ENCODE measurements at regions of chr2 and their contacts with region 1.

Region 1: GRCh38 chr2:219278655-219279516 is at the start of gene DNAJB2:
- DNase-seq: peak; percentile 100
- ATAC-seq: peak; percentile 86
- H3K4me3 Mint-ChIP-seq: peak within 1 kb of the TSS; percentile 96
- H3K27ac Mint-ChIP-seq: peak within 1 kb of the TSS; percentile 95
- H3K4me1 Mint-ChIP-seq: peaks cover 37% of the 10 kb centered on the region
- H3K27me3 Mint-ChIP-seq: no peaks in the 10 kb centered on the region
- total RNA-seq, gene DNAJB2: 51.8 to 62.8 TPM

Region 2: GRCh38 chr2:218286570-218287459 is 992.1 kb before region 1 on chr2:
- CTCF ChIA-PET with region 1: no interaction called
- POLR2A ChIA-PET with region 1: no interaction called
- intact Hi-C with region 1: loop called in 1 of 2 experiments (anchors 5 kb)
- DNase-seq: peak; percentile 91
- ATAC-seq: peak; percentile 74
- H3K4me3 Mint-ChIP-seq: peak overlapping the region; percentile 80
- H3K27ac Mint-ChIP-seq: peak overlapping the region; percentile 99
- H3K4me1 Mint-ChIP-seq: peaks cover 88% of the 10 kb centered on the region
- H3K27me3 Mint-ChIP-seq: no peaks in the 10 kb centered on the region

Region 3: DNA sequence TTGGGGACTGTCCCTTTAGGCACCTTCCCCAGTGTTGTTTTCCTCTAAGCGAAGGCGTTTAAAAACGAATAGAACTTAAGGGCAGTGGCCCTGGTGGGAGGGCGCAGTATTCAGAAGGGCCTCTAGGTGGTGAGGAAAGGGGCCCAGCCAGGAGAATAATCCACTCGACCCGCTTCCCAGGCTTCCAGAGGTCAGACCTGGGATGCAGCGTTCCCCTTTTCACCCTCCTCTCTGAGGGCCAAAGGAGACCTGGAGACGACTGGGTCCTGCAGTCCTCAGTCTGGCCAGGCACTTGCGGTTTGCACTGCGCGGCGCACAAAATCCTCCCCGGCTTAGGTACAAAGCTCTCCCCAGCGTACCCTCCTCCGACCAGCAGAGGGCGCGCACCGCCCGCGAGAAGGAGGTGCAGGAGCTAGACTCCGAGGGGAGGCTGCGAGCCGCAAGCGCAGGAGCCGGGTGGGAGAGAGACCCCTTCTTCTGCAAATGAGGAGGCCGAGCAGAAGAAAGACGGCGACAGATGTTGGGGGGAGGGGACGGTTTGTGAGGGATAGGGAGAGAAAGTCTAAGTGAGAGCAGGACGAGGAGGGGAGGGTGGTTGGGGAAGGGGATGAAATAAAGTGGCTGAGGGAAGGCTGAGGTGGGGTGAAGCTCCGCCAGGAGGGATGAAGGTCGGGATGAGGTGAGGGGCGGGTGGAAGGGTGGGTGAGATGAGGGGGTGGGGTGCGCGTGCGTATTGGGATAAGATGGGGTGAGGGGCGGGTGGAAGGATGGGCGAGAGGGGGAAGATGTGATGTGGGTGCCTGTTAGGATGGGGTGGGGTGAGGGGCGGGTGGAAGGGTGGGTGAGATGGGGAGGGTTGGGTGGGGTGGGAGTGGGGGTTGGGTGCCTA is 298.8 kb before region 1 on chr2:
- CTCF ChIA-PET with region 1: no interaction called
- POLR2A ChIA-PET with region 1: no interaction called
- intact Hi-C with region 1: no loop called
- DNase-seq: peak; percentile 93
- ATAC-seq: peak; percentile 90
- H3K4me3 Mint-ChIP-seq: peak overlapping the region; percentile 43
- H3K27ac Mint-ChIP-seq: no peak overlapping the region
- H3K4me1 Mint-ChIP-seq: peaks cover 28% of the 10 kb centered on the region
- H3K27me3 Mint-ChIP-seq: peaks cover 56% of the 10 kb centered on the region

Region 4: DNA sequence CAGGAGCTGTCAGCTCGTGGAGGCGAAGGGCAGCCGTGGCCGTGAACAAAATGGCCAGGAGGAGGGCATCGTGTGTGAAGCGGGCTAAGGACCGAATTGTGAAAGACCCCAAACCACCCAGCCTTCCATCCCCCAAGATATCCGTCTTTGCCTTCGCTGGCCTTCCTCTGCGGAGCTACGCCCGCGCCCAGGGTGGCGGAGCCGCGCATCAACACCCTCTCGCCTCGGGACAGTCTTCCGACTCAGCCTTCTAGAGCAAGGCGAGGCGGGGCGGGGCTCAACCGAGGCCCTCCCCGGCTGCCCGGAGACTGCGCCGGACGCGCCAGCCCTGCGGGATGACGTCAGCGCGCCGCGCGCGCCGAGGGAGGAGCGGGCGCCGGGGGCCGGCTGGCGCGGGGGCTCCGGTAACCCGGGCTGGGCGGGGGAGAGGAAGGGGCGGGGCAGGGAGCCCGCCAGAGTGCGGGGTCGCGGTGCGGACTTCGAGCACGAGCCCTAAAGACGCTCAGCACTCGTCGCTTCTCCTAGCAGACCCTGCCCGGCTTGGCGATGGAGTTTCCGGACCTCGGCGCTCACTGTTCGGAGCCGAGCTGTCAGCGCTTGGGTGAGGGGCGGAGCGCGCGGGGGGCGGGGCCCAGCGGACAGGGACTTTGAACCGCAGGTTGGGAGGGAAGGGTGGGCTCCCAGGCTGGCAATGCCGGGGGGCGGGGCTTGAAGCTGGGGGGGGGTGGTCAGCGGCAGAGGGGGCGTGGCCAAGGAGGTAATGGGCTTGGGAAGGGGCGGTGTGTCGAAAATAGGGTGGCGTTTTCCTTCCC is 72.2 kb before region 1 on chr2 and contains the start of gene ZFAND2B:
- CTCF ChIA-PET with region 1: interaction called, 5 read pairs
- POLR2A ChIA-PET with region 1: no interaction called
- intact Hi-C with region 1: loop called (anchors 1 to 2 kb)
- DNase-seq: peak; percentile 98
- ATAC-seq: peak; percentile 96
- H3K4me3 Mint-ChIP-seq: peak within 1 kb of the TSS; percentile 86
- H3K27ac Mint-ChIP-seq: peak within 1 kb of the TSS; percentile 94
- H3K4me1 Mint-ChIP-seq: peaks cover 34% of the 10 kb centered on the region
- H3K27me3 Mint-ChIP-seq: no peaks in the 10 kb centered on the region
- total RNA-seq, gene ZFAND2B: 21.5 to 27.6 TPM

Region 5: DNA sequence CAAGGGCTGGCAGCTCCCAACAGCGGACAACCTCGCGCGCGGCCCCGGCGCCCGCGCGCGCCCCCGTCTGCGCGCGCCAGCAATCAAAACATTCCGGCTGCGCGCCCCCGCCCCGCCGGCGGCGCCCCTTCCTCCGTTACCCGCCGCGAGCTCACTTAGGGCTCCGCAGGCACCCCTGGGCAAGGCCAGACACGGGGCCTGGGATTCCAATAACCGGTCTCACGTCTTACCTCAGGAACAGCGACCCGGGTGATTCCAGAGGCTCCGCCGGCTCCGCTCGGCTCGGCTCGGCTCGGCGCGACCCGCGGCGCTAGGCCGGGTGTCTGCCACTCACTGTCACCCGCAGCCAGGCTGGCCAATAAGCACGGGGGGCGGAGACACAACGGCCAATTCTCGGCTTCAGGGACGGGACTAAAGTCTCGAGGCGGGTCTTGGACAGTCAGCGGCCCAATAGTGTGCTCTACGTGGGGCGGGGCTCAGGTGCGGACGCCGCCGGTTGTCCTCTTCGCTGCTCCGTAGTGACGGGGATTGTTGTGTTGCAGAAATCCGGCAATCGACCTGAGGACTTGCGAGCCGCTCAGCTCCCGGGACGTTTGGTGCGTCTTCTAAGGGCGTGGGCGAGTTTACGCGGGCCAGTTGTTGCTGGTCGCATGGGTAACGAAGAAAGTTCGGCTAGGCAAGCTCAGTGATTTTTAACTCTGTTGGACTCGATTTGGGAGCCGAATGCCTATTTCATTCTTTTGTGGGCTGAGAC is 49.4 kb before region 1 on chr2 and contains the starts of genes ANKZF1 and ATG9A:
- CTCF ChIA-PET with region 1: interaction called, 7 read pairs
- POLR2A ChIA-PET with region 1: interaction called, 8 read pairs
- intact Hi-C with region 1: loop called (anchors 1 kb)
- DNase-seq: peak; percentile 99
- ATAC-seq: peak; percentile 98
- H3K4me3 Mint-ChIP-seq: peak within 1 kb of the TSS; percentile 98
- H3K27ac Mint-ChIP-seq: peak within 1 kb of the TSS; percentile 98
- H3K4me1 Mint-ChIP-seq: peaks cover 34% of the 10 kb centered on the region
- H3K27me3 Mint-ChIP-seq: no peaks in the 10 kb centered on the region
- total RNA-seq, gene ANKZF1: 140 to 166 TPM
- total RNA-seq, gene ATG9A: 43.5 to 45.6 TPM

Region 6: GRCh38 chr2:219253753-219254590 is 24.9 kb before region 1 on chr2 and contains the start of gene TUBA4A:
- CTCF ChIA-PET with region 1: interaction called, 68 read pairs
- POLR2A ChIA-PET with region 1: interaction called, 33 read pairs
- intact Hi-C with region 1: loop called (anchors 1 kb)
- DNase-seq: peak; percentile 94
- ATAC-seq: peak; percentile 63
- H3K4me3 Mint-ChIP-seq: peak within 1 kb of the TSS; percentile 89
- H3K27ac Mint-ChIP-seq: peak within 1 kb of the TSS; percentile 93
- H3K4me1 Mint-ChIP-seq: peaks cover 54% of the 10 kb centered on the region
- H3K27me3 Mint-ChIP-seq: no peaks in the 10 kb centered on the region
- total RNA-seq, gene TUBA4A: 210 to 369 TPM

Region 7: GRCh38 chr2:219325136-219325535 is 46.2 kb after region 1 on chr2:
- CTCF ChIA-PET with region 1: no interaction called
- POLR2A ChIA-PET with region 1: no interaction called
- intact Hi-C with region 1: no loop called
- DNase-seq: no peak
- ATAC-seq: no peak
- H3K4me3 Mint-ChIP-seq: no peak overlapping the region
- H3K27ac Mint-ChIP-seq: no peak overlapping the region
- H3K4me1 Mint-ChIP-seq: peaks cover 11% of the 10 kb centered on the region
- H3K27me3 Mint-ChIP-seq: peaks cover 19% of the 10 kb centered on the region

Region 8: DNA sequence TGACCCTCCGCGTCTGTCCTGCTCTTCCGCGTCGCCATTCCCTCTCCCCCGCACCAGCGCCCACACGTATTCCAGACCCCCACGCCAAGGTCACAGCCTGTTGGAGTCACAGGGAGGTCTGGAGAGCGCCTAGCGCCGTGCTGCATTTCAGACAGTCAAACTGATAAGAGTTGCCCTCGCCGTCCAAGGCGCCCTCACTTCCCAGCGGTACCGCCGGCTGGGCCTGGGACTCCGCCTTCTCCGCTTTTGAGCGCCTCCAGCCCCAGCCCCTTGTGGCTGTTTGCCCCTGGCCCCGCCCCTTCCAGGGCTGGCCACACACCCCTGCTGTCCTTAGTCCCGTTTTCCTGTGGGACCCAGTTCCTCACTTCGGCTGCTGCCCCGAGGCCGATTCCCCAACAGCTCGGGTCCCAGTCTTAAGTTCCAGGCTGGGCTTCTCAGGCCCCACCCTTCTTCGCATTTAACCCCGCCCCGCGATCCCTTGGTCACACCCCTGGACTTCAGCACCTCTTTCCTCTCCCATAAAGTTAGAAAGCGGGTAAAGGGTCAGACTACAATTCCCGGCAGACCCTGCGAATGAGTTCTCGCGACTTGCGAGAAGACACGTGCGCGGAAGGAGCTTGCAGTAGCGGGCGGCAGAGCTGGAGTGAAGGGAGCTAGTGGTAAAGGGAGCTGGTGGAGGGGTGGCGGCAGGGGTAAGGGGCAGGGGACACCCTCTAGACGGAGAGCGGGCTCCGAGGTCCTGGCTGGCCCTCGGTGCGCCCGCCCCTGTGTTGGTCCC is 219.6 kb after region 1 on chr2 and contains the start of gene GMPPA:
- CTCF ChIA-PET with region 1: no interaction called
- POLR2A ChIA-PET with region 1: no interaction called
- intact Hi-C with region 1: loop called in 1 of 2 experiments (anchors 1 kb)
- DNase-seq: peak; percentile 96
- ATAC-seq: peak; percentile 97
- H3K4me3 Mint-ChIP-seq: peak within 1 kb of the TSS; percentile 86
- H3K27ac Mint-ChIP-seq: peak within 1 kb of the TSS; percentile 72
- H3K4me1 Mint-ChIP-seq: peaks cover 38% of the 10 kb centered on the region
- H3K27me3 Mint-ChIP-seq: peaks cover 38% of the 10 kb centered on the region
- total RNA-seq, gene GMPPA: 35.2 to 35.5 TPM

Region 9: GRCh38 chr2:219661197-219661954 is 382.5 kb after region 1 on chr2:
- CTCF ChIA-PET with region 1: no interaction called
- POLR2A ChIA-PET with region 1: no interaction called
- intact Hi-C with region 1: no loop called
- DNase-seq: no peak
- ATAC-seq: no peak
- H3K4me3 Mint-ChIP-seq: no peak overlapping the region
- H3K27ac Mint-ChIP-seq: no peak overlapping the region
- H3K4me1 Mint-ChIP-seq: peaks cover 2% of the 10 kb centered on the region
- H3K27me3 Mint-ChIP-seq: peaks cover 25% of the 10 kb centered on the region

Measured in activated CD4-positive, alpha-beta T cell treated with anti-CD3 and anti-CD28 coated beads for 36 hours (primary cell).